Heart right ventricle (tissue), 16 donors: ENCODE measurements at regions of chr11 and their contacts with region 1.

Region 1: GRCh38 chr11:76721755-76722677 is 51.5 kb upstream of the LRRC32 start:
- DNase-seq: peak; percentile 84 to 85
- ATAC-seq: peak; percentile 86 to 97 (median 92)
- H3K4me3 ChIP-seq: peak overlapping the region in 3 of 10 donors; percentile 16 to 20 (median 20)
- H3K27ac ChIP-seq: no peak overlapping the region
- H3K4me1 ChIP-seq: peaks cover 0 to 12% (median 7%) of the 10 kb centered on the region in 9 donors
- H3K27me3 ChIP-seq: peaks cover 0 to 23% (median 5%) of the 10 kb centered on the region in 7 donors
- CTCF ChIP-seq: peak; percentile 75 to 94 (median 91)

Region 2: DNA sequence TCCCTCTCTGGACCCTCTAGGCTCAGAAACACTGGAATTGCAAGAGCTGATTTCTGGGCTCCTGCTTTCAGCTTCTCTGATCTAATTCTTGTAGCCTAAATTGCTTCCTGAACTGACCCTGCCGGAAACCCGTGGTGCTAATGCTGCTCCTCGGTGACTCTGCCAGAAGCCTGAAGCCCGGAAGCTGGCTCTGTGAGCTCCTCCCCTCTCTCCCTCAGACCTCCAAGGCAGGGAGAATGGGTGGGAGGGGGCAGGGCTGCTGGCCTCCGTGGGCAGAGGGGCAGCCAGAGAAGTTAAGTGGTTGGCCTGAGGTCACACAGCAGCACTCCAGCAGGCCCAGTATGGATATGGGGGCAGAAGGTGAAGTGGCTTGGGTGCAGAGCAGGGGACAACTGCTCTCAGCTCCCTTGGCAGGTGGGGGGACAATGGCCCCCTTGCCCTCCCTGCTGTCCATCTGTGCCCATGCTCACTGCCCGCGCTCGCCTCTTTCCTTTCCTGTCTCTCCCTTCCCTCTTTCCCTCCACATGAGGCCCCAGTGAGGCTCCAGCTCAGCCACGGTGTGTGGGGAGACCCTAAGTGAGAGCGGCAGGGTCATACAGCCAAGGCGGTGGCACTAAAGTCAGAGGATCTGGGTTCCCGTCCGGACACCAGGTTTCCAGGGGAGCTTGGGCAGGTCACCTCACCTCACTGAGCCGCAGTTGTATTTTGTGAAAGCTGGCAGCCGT is 361.0 kb after region 1 on chr11:
- intact Hi-C with region 1: loop called in 1 of 10 experiments (anchors 10 kb)
- DNase-seq: peak; percentile 54 to 62
- ATAC-seq: peak; percentile 42 to 87 (median 82)
- H3K4me3 ChIP-seq: peak overlapping the region in 3 of 10 donors; percentile 3 to 20 (median 14)
- H3K27ac ChIP-seq: peak overlapping the region in 9 of 10 donors; percentile 33 to 83 (median 60)
- H3K4me1 ChIP-seq: peaks cover 9 to 28% (median 18%) of the 10 kb centered on the region in 9 donors
- H3K27me3 ChIP-seq: no peaks in the 10 kb centered on the region
- CTCF ChIP-seq: no peak

Region 3: DNA sequence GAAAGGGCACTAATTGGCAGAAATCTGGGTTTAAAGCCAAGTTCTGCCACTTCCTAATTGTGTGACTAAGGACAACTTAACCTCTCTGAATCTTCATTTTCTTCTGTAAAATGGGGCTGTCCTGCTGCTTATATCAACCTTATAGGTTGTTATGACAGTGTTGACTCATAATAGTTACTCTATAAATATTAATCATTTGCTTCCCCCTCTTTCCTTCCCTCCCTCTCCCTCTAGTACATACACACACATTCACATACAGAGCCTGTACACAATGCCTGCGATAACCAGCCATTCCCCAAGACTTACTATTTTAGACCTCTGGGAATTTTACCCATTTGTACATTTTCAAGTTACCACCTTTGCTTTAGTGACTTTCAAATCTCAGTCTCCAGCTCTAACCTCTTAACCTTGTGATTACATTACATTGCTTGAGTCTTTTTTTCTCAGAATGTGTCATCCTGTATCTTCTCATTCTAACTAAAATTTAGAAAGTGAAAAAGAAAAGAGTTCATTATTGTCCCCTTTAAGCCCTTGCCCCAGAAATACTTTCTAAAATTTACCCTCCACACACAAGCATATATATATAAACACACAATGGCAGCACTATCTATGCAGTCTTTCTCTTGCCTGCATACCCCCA is 547.6 kb after region 1 on chr11:
- intact Hi-C with region 1: no loop called
- DNase-seq: no peak
- ATAC-seq: no peak
- H3K4me3 ChIP-seq: no peak overlapping the region
- H3K27ac ChIP-seq: no peak overlapping the region
- H3K4me1 ChIP-seq: no peaks in the 10 kb centered on the region
- H3K27me3 ChIP-seq: peaks cover 0 to 5% (median 0%) of the 10 kb centered on the region in 7 donors
- CTCF ChIP-seq: no peak